ENCODE measurements at regions of chr9 and their contacts with region 1.

Region 1: GRCh38 chr9:93453047-93453914 is at the start of gene FAM120AOS:
- DNase-seq: peak; percentile 89
- ATAC-seq: peak; percentile 77
- H3K4me3 ChIP-seq: peak within 1 kb of the TSS; percentile 74 to 84
- H3K27ac ChIP-seq: peak within 1 kb of the TSS; percentile 75
- H3K4me1 ChIP-seq: peaks cover 12 to 17% of the 10 kb centered on the region in 2 experiments
- H3K27me3 ChIP-seq: no peaks in the 10 kb centered on the region
- CTCF ChIP-seq: no peak
- POLR2A ChIP-seq: peak; percentile 69
- RAD21 ChIP-seq: no peak
- total RNA-seq, gene FAM120AOS: 31.2 TPM

Region 2: DNA sequence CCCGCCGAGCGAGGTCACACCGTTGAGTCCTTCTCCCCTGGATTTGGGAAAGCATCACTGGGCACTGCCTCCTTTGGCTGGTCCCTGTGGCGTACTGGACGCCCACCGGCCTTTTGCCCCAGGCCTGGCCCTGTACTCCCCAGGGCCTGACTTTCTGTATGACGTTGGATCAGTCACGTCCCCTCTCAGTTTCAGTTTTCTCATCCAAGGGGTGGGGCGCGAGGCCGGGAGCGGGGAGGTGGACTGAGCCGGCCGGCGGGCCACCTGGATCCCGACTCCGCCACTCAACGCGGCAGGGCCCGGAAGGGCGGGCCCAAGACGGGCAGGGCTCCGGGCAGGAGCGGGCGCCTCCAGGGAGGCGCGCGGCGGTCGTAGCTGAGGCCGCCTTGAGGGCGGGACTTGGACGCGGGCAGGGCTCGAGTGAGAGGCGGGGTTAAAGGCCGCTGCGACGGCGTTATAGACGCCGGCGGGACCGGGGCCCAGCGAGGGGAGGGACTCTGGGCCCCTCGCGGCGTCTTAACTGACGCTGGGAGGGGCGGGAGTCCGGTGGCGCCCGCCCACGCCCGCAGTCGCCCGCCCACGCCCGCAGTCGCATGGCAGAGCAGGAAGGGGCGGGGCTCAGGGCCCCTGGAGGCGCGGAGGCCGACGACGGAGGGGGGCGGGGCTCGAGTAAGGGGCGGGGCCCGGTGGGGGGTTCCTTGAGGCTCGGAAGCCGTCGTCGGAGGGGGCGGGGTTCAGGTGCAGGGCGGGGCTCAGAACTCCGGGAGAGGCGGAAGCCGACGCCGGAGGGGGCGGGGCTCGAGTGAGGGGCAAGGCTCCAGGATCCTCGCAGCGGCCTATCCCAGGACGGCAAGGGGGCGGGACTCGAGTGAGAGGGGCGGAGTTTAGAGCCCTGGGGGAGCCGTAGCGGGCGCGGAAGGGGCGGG is 357.8 kb before region 1 on chr9:
- CTCF ChIA-PET with region 1: no interaction called
- POLR2A ChIA-PET with region 1: no interaction called
- RAD21 ChIA-PET with region 1: no interaction called
- intact Hi-C with region 1: loop called (anchors 5 kb)
- DNase-seq: peak; percentile 96
- ATAC-seq: peak; percentile 84
- H3K4me3 ChIP-seq: peak overlapping the region; percentile 63 to 94
- H3K27ac ChIP-seq: peak overlapping the region; percentile 81
- H3K4me1 ChIP-seq: peaks cover 41 to 81% of the 10 kb centered on the region in 2 experiments
- H3K27me3 ChIP-seq: no peaks in the 10 kb centered on the region
- CTCF ChIP-seq: no peak
- POLR2A ChIP-seq: peak; percentile 48
- RAD21 ChIP-seq: no peak

Region 3: DNA sequence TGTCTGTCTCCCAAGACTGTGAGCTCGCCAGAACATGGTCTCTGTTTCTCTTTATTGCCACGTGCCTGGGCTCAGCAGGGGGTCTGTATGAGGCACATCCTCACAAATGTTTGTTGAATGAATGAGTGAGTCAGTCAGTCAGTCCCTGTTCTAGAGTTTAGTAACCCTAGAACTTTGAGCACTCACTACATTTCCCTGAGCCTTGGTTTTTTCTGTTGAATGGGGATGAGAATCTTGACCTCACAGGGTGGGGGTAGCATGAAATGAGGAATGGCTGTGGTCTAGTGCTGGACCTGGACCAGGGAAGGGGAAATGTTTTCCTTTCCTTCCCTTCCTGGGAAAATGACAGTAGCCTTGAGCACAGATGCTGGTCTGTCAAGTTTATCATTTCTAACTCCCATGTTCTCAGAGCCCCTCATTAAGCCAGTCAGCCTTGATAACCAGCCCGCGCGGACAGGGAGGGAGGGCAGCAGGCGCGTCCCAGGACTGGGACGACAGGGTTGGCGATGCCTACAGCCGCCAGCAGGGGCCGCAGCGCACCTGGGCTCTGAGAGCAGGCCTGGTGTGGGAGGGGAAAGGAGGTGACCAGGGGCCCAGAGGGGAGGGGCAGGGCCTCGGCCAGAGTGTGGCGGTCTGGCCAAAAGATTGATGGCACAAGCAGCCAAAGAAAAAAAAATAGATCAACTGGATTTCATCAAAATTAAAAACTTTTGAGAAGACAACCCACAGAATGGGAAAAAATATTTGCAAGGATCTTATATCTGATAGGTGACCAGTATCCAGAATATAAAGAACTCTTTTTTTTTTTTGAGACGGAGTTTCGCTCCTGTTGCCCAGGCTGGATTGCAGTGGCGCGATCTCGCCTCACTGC is 293.4 kb before region 1 on chr9:
- CTCF ChIA-PET with region 1: no interaction called
- POLR2A ChIA-PET with region 1: no interaction called
- RAD21 ChIA-PET with region 1: no interaction called
- intact Hi-C with region 1: loop called (anchors 10 kb)
- DNase-seq: peak; percentile 67
- ATAC-seq: peak; percentile 100
- H3K4me3 ChIP-seq: peak overlapping the region in 1 of 2 experiments; percentile 36; a peak in 2 of 4 replicates
- H3K27ac ChIP-seq: no peak overlapping the region
- H3K4me1 ChIP-seq: peaks cover 3 to 7% of the 10 kb centered on the region in 2 experiments; a peak in 3 of 4 replicates
- H3K27me3 ChIP-seq: no peaks in the 10 kb centered on the region
- CTCF ChIP-seq: peak; percentile 98 to 99 (median 99)
- POLR2A ChIP-seq: no peak
- RAD21 ChIP-seq: peak; percentile 100

Region 4: GRCh38 chr9:93336700-93337099 is 116.6 kb before region 1 on chr9:
- CTCF ChIA-PET with region 1: no interaction called
- POLR2A ChIA-PET with region 1: no interaction called
- RAD21 ChIA-PET with region 1: no interaction called
- intact Hi-C with region 1: no loop called
- DNase-seq: no peak
- ATAC-seq: no peak
- H3K4me3 ChIP-seq: no peak overlapping the region
- H3K27ac ChIP-seq: no peak overlapping the region
- H3K4me1 ChIP-seq: no peaks in the 10 kb centered on the region
- H3K27me3 ChIP-seq: no peaks in the 10 kb centered on the region
- CTCF ChIP-seq: 0 out of 6 replicates have a peak, but pooled peaks of 1 of the 3 experiments have one; percentile 8
- POLR2A ChIP-seq: no peak
- RAD21 ChIP-seq: no peak

Region 5: DNA sequence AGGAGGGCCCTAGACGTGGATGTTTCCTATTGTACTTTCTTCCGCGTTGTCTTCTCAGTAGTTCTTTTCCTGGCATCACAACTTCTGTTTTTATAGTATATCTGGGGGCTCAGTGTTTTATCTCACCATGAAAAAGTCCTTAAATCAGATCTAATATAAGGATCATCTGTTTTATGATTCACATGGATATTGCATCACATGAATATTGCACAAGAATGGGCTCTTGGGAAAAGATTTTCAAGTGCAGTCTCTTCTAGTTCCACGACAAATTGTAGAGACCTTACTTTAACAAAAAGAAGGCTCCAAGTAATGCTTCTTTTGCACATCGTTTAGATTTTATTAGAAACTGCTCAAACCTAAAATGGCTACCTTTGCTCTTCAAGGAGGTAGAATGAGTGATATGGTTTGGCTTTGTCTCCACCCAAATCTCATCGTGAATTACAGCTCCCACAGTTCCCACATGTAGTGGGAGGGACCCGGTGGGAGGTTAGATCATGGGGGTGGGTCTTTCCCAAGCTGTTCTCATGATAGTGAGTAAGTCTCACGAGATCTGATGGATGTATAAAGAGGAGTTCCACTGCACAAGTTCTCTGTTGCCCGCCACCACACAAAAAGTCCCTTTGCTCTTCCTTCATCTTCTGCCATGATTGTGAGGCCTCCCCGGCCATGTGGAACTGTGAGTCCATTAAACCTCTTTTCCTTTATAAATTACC is 55.5 kb before region 1 on chr9:
- CTCF ChIA-PET with region 1: no interaction called
- POLR2A ChIA-PET with region 1: no interaction called
- RAD21 ChIA-PET with region 1: no interaction called
- intact Hi-C with region 1: no loop called
- DNase-seq: no peak
- ATAC-seq: no peak
- H3K4me3 ChIP-seq: no peak overlapping the region
- H3K27ac ChIP-seq: no peak overlapping the region
- H3K4me1 ChIP-seq: no peaks in the 10 kb centered on the region
- H3K27me3 ChIP-seq: no peaks in the 10 kb centered on the region
- CTCF ChIP-seq: no peak
- POLR2A ChIP-seq: no peak
- RAD21 ChIP-seq: no peak

Region 6: DNA sequence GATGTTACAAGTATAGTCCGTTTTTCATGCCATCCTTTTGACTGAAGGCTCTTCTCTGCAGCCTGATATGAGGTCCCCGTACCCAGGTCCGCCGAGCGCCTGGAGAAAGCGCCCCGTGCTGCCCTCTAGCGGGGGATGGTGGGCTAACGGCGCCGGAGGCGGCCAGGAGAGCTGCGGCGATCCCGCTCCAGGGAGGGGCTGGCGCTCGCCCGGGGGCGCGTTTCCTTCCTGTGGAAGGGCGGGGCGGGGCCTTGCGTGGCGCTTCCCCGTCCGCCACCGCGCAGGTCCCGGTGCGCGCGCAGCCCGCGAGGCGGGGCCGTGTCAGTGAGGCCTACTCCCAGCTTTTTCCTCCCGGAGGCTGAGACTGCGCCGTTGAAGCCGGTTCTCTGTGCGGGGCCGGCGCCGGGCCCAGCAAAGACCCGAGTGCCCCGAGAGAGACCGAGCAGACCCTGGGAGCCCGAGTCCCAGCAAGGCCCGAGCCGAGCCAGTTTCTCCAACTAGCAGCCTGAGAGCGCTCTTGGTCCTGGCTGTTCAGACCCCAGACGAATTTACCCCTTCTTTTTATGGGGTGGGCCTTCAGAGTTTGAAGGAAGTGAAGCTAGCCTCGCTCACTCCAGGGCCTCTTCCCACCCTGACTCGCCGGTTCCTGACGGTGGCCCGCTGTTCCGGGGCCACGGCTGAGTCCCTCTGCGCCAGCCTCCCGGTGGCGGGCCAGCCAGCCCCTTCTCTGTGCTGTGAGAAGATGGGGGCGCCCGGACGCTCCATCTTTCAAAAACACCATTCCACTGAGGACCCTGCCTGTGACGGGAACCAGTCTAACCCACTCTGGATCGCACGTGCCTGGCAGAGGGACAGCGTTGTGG is 113.4 kb after region 1 on chr9:
- CTCF ChIA-PET with region 1: interaction called, 4 read pairs
- POLR2A ChIA-PET with region 1: no interaction called
- RAD21 ChIA-PET with region 1: no interaction called
- intact Hi-C with region 1: loop called (anchors 1 kb)
- DNase-seq: peak; percentile 86
- ATAC-seq: peak; percentile 98
- H3K4me3 ChIP-seq: peak overlapping the region; percentile 67 to 70
- H3K27ac ChIP-seq: peak overlapping the region; percentile 74
- H3K4me1 ChIP-seq: peaks cover 4 to 12% of the 10 kb centered on the region in 2 experiments; a peak in 2 of 4 replicates
- H3K27me3 ChIP-seq: no peaks in the 10 kb centered on the region
- CTCF ChIP-seq: peak; percentile 74 to 93 (median 87)
- POLR2A ChIP-seq: peak; percentile 22
- RAD21 ChIP-seq: peak; percentile 80